ENCODE measurements at regions of chr16 and their contacts with region 1.

Region 1: GRCh38 chr16:73047518-73048291 is at the start of gene ZFHX3:
- DNase-seq: peak in 1 of 2 donors; percentile 91
- H3K4me3 ChIP-seq: peak within 1 kb of the TSS; percentile 88 to 89
- H3K27ac ChIP-seq: peak within 1 kb of the TSS; percentile 98 to 99
- H3K4me1 ChIP-seq: peaks cover 11 to 71% of the 10 kb centered on the region in 2 donors
- H3K27me3 ChIP-seq: no peaks in the 10 kb centered on the region
- CTCF ChIP-seq: peak in 1 of 3 experiments; percentile 28
- total RNA-seq, gene ZFHX3: 34.8 TPM

Region 2: DNA sequence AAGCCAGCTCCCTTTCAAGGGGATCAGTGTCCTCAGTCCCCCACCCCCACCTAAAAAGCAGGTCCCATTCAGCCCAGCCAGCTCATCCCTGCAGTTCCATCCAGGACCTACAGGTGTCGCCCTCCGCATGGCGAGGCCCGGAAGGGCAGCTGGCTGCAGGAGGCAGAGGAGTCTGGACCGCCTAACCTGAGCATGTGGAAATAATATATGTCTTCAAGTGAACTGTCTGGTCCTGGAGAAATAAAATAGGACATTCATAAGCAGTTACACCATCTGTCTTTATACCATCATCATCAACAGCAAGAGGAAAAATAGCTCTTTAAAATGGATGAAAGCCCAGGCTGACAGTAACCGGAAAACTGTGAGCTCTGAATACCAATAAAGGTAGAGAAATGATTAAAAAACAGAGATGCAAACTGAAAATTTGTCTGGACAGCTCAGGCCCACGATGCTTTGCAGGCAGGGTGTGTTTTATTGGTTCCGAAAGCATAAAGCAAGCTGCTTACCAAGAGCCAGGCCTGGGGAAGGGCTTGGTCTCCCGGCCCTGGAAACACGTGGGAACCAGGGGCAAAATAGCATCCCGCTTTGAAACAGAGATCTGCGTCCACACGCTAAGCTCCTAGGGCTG is 215.0 kb before region 1 on chr16:
- intact Hi-C with region 1: loop called (anchors 5 kb)
- DNase-seq: peak; percentile 26 to 89
- H3K4me3 ChIP-seq: no peak overlapping the region
- H3K27ac ChIP-seq: peak overlapping the region; percentile 63 to 66
- H3K4me1 ChIP-seq: peaks cover 6 to 16% of the 10 kb centered on the region in 2 donors
- H3K27me3 ChIP-seq: no peaks in the 10 kb centered on the region
- CTCF ChIP-seq: peak; percentile 83 to 99 (median 99)

Region 3: GRCh38 chr16:72989579-72990551 is 57.8 kb before region 1 on chr16:
- intact Hi-C with region 1: loop called (anchors 2 kb)
- DNase-seq: peak; percentile 74 to 94
- H3K4me3 ChIP-seq: peak overlapping the region; percentile 43 to 55
- H3K27ac ChIP-seq: peak overlapping the region; percentile 92
- H3K4me1 ChIP-seq: peaks cover 24 to 71% of the 10 kb centered on the region in 2 donors
- H3K27me3 ChIP-seq: no peaks in the 10 kb centered on the region
- CTCF ChIP-seq: no peak

Region 4: DNA sequence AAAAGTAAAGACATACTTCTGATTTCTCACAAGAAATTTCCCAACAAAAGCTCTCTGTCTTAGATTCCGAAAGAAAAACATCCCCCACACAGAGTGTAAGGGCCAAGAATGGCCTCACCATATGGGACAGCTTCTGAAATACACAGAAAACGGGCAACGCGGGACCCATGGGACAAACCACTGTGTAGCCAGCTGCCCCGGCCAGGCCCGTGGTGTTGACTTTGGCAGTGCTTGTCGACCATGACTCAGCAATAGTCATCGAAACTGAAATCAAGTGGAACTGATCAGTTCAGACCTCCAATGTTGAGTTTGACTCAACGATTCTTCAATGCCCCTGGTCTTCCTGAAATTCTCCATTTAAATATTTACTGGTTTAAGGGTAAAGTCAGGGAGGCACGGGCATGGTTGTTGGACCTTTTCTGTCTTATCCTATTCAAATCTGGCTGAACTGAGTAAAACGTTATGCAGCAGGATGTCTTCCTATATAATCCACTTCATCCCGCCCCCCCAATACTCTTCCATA is 27.3 kb before region 1 on chr16:
- intact Hi-C with region 1: loop called (anchors 2 kb)
- DNase-seq: peak in 1 of 2 donors; percentile 92
- H3K4me3 ChIP-seq: peak overlapping the region in 1 of 2 donors; percentile 45
- H3K27ac ChIP-seq: peak overlapping the region; percentile 30 to 62
- H3K4me1 ChIP-seq: peaks cover 25 to 70% of the 10 kb centered on the region in 2 donors
- H3K27me3 ChIP-seq: no peaks in the 10 kb centered on the region
- CTCF ChIP-seq: no peak